ENCODE measurements at regions of chr18 and their contacts with region 1.

Region 1: DNA sequence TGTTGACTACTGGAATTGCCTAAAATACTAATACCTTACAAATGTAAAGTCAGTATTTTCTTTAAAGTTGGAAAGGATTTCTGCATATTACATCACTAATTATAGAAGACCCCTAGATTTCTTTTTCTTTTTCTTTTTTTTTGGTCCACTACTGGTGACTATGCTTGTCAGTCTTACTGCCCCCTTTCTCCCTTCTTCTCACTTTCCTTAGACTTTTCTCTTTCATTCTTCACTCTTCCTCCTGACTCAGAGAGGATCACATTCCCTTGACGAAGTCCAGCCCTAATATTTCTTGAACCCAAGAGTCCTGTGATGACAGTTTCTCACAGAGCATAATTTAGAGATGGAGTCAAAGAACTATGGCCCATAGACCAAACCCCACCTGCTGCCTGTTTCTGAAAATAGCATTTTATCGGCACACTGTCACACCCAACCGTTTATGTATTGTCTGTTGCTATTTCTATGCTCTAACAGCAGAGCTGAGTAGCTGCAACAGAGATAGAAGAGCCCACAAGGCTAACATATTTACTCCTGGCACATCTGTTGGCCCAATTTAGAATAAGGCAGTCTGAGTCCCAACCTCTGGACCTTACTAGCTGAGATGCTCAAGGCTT is 40.6 kb upstream of the RIOK3 start:
- DNase-seq: no peak
- ATAC-seq: no peak
- H3K4me3 ChIP-seq: no peak overlapping the region
- H3K4me3 Mint-ChIP-seq: no peak overlapping the region
- H3K27ac ChIP-seq: no peak overlapping the region
- H3K27ac Mint-ChIP-seq: no peak overlapping the region
- H3K4me1 ChIP-seq: no peaks in the 10 kb centered on the region
- H3K4me1 Mint-ChIP-seq: no peaks in the 10 kb centered on the region
- H3K27me3 ChIP-seq: no peaks in the 10 kb centered on the region
- H3K27me3 Mint-ChIP-seq: no peaks in the 10 kb centered on the region
- CTCF ChIP-seq: no peak

Region 2: DNA sequence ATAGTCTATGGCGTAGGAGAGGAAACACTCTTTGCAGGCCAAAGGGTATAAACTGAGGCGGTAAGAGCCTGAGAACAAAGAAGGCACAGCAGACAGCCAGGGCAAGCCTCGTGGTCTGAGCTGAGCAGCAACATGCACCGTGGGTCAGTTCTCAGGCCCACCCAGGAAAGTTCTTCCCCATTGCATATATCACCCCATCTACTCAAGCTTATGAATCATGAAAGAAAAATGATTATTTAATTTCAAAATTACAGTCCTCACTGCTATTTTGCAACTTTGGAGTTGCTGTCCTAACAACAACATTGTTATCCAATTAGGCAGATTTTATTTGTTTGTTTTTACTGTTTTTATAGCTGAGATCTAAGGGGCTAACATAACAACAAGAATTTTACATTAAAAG is 14.1 kb before region 1 on chr18:
- CTCF ChIA-PET with region 1: interaction called, 27 read pairs
- POLR2A ChIA-PET with region 1: no interaction called
- intact Hi-C with region 1: no loop called
- DNase-seq: no peak
- ATAC-seq: no peak
- H3K4me3 ChIP-seq: no peak overlapping the region
- H3K4me3 Mint-ChIP-seq: no peak overlapping the region
- H3K27ac ChIP-seq: no peak overlapping the region
- H3K27ac Mint-ChIP-seq: peak overlapping the region; percentile 72
- H3K4me1 ChIP-seq: peaks cover 10% of the 10 kb centered on the region
- H3K4me1 Mint-ChIP-seq: peaks cover 31% of the 10 kb centered on the region
- H3K27me3 ChIP-seq: no peaks in the 10 kb centered on the region
- H3K27me3 Mint-ChIP-seq: no peaks in the 10 kb centered on the region
- CTCF ChIP-seq: no peak

Measured in CD8-positive, alpha-beta T cell (primary cell).